Activated T-helper 2 cell treated with anti-CD3 and anti-CD28 coated beads, Interferon-gamma antibody, Interleukin-2, Interleukin-4, amounts not matched to agents 10 μg/mL and 5 μg/mL and 100 μg/mL, durations not matched to agents 14 hours and 24 hours and 36 hours (primary cell): ENCODE measurements at regions of chr1 and their contacts with region 1.

Region 1: GRCh38 chr1:202888531-202889360 is at the start of gene RABIF:
- DNase-seq: peak; percentile 96
- H3K4me3 Mint-ChIP-seq: peak within 1 kb of the TSS; percentile 97
- H3K27ac Mint-ChIP-seq: peak within 1 kb of the TSS; percentile 99
- H3K4me1 Mint-ChIP-seq: peaks cover 16% of the 10 kb centered on the region
- H3K27me3 Mint-ChIP-seq: no peaks in the 10 kb centered on the region
- total RNA-seq, gene RABIF: 13.1 and 15.5 TPM in 2 replicates

Region 2: DNA sequence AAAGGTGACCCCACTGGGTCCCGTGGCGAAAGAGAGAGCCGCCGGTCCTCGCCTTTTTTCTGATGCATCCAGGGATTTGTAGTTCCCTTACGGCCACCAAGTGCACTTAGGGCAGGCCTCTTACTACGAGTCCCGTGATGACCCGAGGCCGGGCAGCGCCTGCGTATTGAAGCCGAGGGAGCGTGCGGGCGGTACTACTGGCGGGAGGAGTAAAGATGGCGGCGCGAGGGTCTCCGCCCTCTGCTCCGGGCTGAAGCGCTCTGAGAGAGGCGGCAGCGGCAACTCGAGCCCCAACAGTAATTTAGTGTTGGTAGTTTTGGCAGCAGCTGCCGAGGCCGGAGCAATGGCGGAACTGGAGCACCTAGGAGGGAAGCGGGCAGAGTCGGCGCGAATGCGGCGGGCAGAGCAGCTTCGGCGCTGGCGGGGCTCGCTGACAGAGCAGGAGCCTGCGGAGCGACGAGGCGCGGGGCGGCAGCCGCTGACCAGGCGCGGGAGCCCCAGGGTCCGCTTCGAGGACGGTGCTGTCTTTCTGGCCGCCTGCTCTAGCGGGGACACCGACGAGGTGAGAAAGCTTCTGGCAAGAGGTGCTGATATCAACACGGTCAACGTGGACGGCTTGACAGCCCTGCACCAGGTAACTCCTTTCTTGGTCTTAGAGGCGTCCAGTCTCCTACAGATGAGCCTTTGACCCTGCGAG is 540.1 kb before region 1 on chr1 and contains the start of gene PPP1R12B:
- intact Hi-C with region 1: loop called (anchors 10 kb)
- DNase-seq: peak; percentile 95
- H3K4me3 Mint-ChIP-seq: peak within 1 kb of the TSS; percentile 98
- H3K27ac Mint-ChIP-seq: peak within 1 kb of the TSS; percentile 94
- H3K4me1 Mint-ChIP-seq: peaks cover 25% of the 10 kb centered on the region
- H3K27me3 Mint-ChIP-seq: no peaks in the 10 kb centered on the region
- total RNA-seq, gene PPP1R12B: 13.5 and 15.4 TPM in 2 replicates

Region 3: DNA sequence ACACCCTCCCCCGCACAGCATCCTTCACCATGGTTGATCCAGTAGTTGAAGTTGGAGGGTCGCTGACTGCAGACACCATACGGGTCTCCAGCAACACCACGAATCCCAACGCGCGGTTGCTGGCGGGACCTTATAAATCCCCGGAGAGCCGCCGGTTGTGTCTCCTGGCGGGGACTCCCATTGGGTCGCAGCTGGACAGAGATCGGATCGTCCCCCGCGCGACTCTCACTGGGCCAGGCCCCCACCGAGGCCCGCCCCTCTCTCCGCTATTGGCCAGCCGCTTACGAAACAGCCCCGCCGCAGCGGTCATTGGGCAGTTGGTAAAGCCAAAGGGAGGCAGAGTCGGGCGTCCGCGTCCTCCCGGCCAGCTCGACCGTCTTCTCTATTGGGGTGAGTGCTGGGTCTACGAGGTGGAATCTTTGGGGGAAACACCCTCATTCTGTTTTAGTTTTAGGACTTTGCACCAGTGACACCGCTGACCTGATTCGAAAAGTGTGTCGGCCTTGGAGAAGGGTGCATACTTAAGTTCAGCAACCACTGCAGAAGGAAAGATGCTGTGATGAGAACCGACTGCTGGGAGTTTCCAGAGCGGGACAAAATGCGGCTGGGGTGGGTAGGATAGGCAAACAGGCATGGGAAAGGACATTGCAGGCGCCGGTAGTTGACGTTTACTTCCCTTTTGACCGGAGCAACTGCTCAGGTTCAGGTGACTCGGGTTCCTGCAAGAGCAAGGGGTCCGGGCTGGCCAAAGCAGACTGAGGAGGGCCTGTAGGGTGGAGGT is 27.1 kb before region 1 on chr1:
- intact Hi-C with region 1: no loop called
- DNase-seq: peak; percentile 28
- H3K4me3 Mint-ChIP-seq: peak overlapping the region; percentile 79
- H3K27ac Mint-ChIP-seq: no peak overlapping the region
- H3K4me1 Mint-ChIP-seq: peaks cover 12% of the 10 kb centered on the region
- H3K27me3 Mint-ChIP-seq: peaks cover 47% of the 10 kb centered on the region

Region 4: DNA sequence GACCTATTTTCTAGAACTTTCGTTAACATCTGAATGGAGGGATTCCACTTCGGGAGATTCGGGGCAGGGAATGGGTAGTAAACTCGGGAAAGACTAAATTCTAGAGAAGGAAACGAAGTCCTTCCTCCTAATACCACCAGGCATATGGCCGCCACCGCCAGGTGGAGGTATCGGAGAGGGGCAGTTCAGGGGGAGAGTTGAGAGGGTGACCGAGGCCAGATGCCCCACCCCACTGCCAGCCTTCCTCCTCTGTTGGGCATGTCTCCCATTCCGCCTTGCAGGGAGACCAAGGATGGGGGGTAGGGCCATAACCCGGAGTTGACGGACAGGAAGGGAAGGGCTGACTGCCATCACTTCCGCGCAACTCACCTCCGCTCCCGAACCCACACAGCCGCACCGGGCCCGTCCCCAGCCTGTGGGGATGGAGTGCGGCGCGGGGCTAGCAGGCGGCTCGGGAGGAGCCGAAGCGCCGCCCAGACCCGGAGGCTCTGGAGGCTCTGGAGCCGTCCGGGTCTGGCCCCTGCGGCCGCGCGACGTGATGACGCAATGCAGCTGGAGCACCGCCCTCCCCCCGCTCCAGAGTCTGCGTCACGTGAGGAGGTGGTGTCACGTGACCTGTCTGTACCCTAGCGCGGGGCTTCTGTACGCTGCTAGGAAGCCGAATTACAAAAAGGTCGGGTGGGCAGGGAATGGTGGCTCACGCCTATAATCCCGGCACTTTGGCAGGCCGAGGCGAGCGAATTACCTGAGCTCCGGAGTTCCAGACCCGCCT is 38.2 kb after region 1 on chr1 and contains the start of gene KLHL12:
- intact Hi-C with region 1: loop called (anchors 1 kb)
- DNase-seq: peak; percentile 93
- H3K4me3 Mint-ChIP-seq: peak within 1 kb of the TSS; percentile 85
- H3K27ac Mint-ChIP-seq: peak within 1 kb of the TSS; percentile 80
- H3K4me1 Mint-ChIP-seq: peaks cover 26% of the 10 kb centered on the region
- H3K27me3 Mint-ChIP-seq: peaks cover 3% of the 10 kb centered on the region
- total RNA-seq, gene KLHL12: 27.7 and 29.2 TPM in 2 replicates

Region 5: GRCh38 chr1:202938287-202938925 is 49.7 kb after region 1 on chr1:
- intact Hi-C with region 1: no loop called
- DNase-seq: no peak
- H3K4me3 Mint-ChIP-seq: no peak overlapping the region
- H3K27ac Mint-ChIP-seq: no peak overlapping the region
- H3K4me1 Mint-ChIP-seq: peaks cover 3% of the 10 kb centered on the region
- H3K27me3 Mint-ChIP-seq: peaks cover 13% of the 10 kb centered on the region

Region 6: DNA sequence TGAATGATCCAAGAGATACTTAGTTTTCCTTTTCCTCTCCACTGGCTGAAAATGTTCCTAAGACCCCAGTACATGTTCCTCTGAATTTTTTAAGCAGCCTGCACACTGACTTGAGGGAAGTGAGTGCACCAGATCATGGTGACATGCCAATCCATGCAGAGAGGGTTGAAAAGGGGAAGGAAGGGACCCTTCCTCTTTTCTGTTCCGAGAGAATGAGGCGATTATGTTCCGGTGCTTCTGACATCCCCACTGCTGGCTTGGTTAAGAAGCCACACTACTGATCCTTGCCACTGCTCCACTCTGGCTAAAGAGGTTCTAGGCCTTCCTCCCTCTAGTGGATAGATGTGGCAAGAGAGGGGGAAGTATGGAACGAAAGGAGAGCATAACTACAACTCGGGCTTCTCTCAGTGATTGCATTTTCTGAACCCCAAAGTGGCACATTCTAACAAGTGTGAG is 80.1 kb after region 1 on chr1:
- intact Hi-C with region 1: loop called (anchors 2 kb)
- DNase-seq: peak; percentile 26
- H3K4me3 Mint-ChIP-seq: peak overlapping the region; percentile 41
- H3K27ac Mint-ChIP-seq: no peak overlapping the region
- H3K4me1 Mint-ChIP-seq: peaks cover 20% of the 10 kb centered on the region
- H3K27me3 Mint-ChIP-seq: peaks cover 14% of the 10 kb centered on the region

Region 7: GRCh38 chr1:203026031-203026989 is 137.6 kb after region 1 on chr1 and contains the start of gene PPFIA4:
- intact Hi-C with region 1: loop called (anchors 1 kb)
- DNase-seq: peak; percentile 87
- H3K4me3 Mint-ChIP-seq: peak within 1 kb of the TSS; percentile 82
- H3K27ac Mint-ChIP-seq: peak within 1 kb of the TSS; percentile 72
- H3K4me1 Mint-ChIP-seq: peaks cover 22% of the 10 kb centered on the region
- H3K27me3 Mint-ChIP-seq: no peaks in the 10 kb centered on the region
- total RNA-seq, gene PPFIA4: 33.4 and 35.1 TPM in 2 replicates